Heart left ventricle (tissue), 16 donors: ENCODE measurements at regions of chr9 and their contacts with region 1.

Region 1: GRCh38 chr9:100066539-100066938 is 32.3 kb downstream of the ERP44 start:
- DNase-seq: peak in 3 of 5 donors; percentile 32 to 33 (median 32)
- ATAC-seq: peak in 3 of 4 donors; percentile 60 to 78 (median 63)
- H3K4me3 ChIP-seq: peak overlapping the region in 3 of 12 donors; percentile 7 to 22 (median 10)
- H3K27ac ChIP-seq: peak overlapping the region in 2 of 12 donors; percentile 32 to 51
- H3K4me1 ChIP-seq: peaks cover 0 to 31% (median 15%) of the 10 kb centered on the region in 12 donors
- H3K27me3 ChIP-seq: no peaks in the 10 kb centered on the region
- CTCF ChIP-seq: no peak
- POLR2A ChIP-seq: no peak

Region 2: GRCh38 chr9:100011062-100011681 is 55.4 kb before region 1 on chr9:
- intact Hi-C with region 1: no loop called
- DNase-seq: no peak
- ATAC-seq: no peak
- H3K4me3 ChIP-seq: no peak overlapping the region
- H3K27ac ChIP-seq: no peak overlapping the region
- H3K4me1 ChIP-seq: no peaks in the 10 kb centered on the region
- H3K27me3 ChIP-seq: no peaks in the 10 kb centered on the region
- CTCF ChIP-seq: peak; percentile 19 to 62 (median 48)
- POLR2A ChIP-seq: no peak

Region 3: GRCh38 chr9:100084734-100085133 is 18.2 kb after region 1 on chr9:
- intact Hi-C with region 1: loop called in 1 of 10 experiments (anchors 1 kb)
- DNase-seq: no peak
- ATAC-seq: no peak
- H3K4me3 ChIP-seq: no peak overlapping the region
- H3K27ac ChIP-seq: no peak overlapping the region
- H3K4me1 ChIP-seq: peaks cover 0 to 60% (median 31%) of the 10 kb centered on the region in 12 donors
- H3K27me3 ChIP-seq: no peaks in the 10 kb centered on the region
- CTCF ChIP-seq: no peak
- POLR2A ChIP-seq: no peak